Activated CD4-positive, alpha-beta memory T cell treated with anti-CD3 and anti-CD28 coated beads for 36 hours (primary cell): ENCODE measurements at regions of chr11 and their contacts with region 1.

Region 1: GRCh38 chr11:47642099-47642855 is at the start of gene MTCH2:
- DNase-seq: peak; percentile 98
- H3K4me3 Mint-ChIP-seq: peak within 1 kb of the TSS; percentile 94
- H3K27ac Mint-ChIP-seq: peak within 1 kb of the TSS; percentile 89
- H3K4me1 Mint-ChIP-seq: peaks cover 20% of the 10 kb centered on the region
- H3K27me3 Mint-ChIP-seq: no peaks in the 10 kb centered on the region
- total RNA-seq, gene MTCH2: 110 to 117 TPM

Region 2: DNA sequence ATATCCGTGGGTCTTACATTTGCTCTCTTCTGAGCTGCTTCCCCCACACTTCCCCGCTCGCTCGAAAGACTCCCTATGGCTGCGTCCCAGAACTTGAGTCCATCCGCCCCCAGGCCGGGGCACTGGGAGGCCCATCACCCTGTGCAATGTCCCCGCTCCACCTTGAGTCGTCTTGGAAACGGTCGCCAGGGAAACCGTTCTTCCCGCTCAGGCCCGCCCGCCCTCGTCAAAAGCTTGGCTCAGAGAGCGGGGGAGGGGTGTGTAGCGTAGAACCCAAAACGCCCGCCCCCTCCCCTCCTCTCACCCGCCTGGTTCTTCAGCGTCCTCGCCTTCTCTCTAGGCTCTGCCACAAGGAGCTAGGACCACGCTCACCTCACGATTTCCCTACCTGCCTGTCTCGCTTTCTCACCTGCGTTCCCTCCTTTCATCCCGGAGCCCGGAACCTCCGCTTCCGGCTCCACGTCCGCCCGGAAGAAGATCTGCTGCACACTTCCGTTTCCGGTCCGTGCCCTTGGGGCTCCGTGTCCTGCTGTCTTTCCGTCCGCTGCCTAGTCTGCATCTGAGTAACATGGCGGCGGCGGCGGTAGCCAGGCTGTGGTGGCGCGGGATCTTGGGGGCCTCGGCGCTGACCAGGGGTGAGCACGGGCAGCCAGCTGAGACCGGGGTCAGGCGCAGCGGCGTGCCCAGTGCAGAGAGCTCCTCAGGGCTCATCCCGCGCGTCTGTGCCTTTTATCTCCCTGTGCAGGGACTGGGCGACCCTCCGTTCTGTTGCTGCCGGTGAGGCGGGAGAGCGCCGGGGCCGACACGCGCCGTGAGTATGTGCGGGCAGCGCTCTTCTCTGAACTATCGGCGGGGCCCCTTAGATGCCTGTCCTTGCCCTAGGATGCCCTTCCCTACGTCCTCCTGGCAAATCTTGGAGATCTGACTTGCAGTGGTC is 63.5 kb before region 1 on chr11 and contains the starts of genes KBTBD4 and NDUFS3:
- CTCF ChIA-PET with region 1: no interaction called
- POLR2A ChIA-PET with region 1: interaction called, 4 read pairs
- intact Hi-C with region 1: loop called (anchors 1 kb)
- DNase-seq: peak; percentile 93
- H3K4me3 Mint-ChIP-seq: peak within 1 kb of the TSS; percentile 94
- H3K27ac Mint-ChIP-seq: peak within 1 kb of the TSS; percentile 93
- H3K4me1 Mint-ChIP-seq: peaks cover 32% of the 10 kb centered on the region
- H3K27me3 Mint-ChIP-seq: peaks cover 1% of the 10 kb centered on the region
- total RNA-seq, gene KBTBD4: 18.7 to 18.8 TPM
- total RNA-seq, gene NDUFS3: 94.0 to 94.4 TPM

Region 3: GRCh38 chr11:47620836-47621378 is 21.4 kb before region 1 on chr11:
- CTCF ChIA-PET with region 1: no interaction called
- POLR2A ChIA-PET with region 1: no interaction called
- intact Hi-C with region 1: no loop called
- DNase-seq: no peak
- H3K4me3 Mint-ChIP-seq: no peak overlapping the region
- H3K27ac Mint-ChIP-seq: no peak overlapping the region
- H3K4me1 Mint-ChIP-seq: no peaks in the 10 kb centered on the region
- H3K27me3 Mint-ChIP-seq: no peaks in the 10 kb centered on the region

Region 4: DNA sequence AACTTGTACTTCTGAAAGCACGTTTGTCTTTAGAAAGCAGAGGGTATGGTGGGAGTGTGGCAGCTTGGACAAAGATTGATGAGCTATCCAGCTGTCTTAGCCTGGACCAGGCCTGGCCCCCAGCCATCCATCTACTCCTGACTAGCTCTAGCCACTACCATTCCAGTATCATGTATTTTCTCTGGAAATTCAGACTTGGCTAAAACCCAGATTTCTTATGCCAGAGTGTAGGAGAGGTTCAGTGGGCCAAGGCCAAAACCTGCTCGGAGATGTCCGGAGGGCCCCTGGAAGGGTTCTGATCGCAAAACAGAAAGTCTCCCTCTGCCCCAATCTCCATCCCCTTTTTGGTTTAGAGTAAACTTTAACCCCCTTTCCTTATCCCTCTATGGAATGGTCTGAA is 24.9 kb after region 1 on chr11:
- CTCF ChIA-PET with region 1: no interaction called
- POLR2A ChIA-PET with region 1: interaction called, 3 read pairs
- intact Hi-C with region 1: loop called (anchors 1 kb)
- DNase-seq: no peak
- H3K4me3 Mint-ChIP-seq: no peak overlapping the region
- H3K27ac Mint-ChIP-seq: no peak overlapping the region
- H3K4me1 Mint-ChIP-seq: peaks cover 18% of the 10 kb centered on the region
- H3K27me3 Mint-ChIP-seq: no peaks in the 10 kb centered on the region

Region 5: DNA sequence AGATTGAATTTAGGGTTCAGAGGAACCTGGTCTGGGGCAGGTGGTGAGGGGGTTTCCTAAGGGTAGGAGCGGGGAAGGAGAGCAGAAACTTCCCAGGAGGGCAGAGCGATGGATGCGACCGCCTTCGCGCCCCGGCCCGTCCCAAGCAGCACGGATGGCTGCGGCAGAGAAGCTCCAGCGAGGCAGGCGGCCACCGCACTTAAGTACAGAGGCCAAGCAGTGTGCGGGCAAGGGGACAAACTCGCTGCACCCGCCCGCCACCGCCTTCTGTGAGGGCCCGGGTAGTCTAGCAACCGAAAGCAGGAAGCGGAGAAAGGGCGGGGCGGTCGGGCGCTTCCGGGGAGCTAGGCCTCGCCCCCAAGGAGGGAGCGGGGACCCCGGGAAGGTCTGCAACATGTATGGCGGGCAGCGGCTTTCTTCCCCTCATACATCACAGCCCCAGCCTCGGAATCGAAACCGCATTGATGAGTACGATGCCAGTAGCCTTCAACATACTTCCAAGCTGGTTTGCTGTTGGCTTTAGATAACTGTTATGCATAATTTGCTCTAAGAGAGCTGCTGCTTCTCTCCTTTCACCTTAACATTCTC is 72.9 kb after region 1 on chr11 and contains the start of gene AGBL2:
- CTCF ChIA-PET with region 1: interaction called, 4 read pairs
- POLR2A ChIA-PET with region 1: interaction called, 6 read pairs
- intact Hi-C with region 1: loop called (anchors 1 kb)
- DNase-seq: peak; percentile 91
- H3K4me3 Mint-ChIP-seq: peak within 1 kb of the TSS; percentile 86
- H3K27ac Mint-ChIP-seq: peak within 1 kb of the TSS; percentile 95
- H3K4me1 Mint-ChIP-seq: peaks cover 21% of the 10 kb centered on the region
- H3K27me3 Mint-ChIP-seq: no peaks in the 10 kb centered on the region
- total RNA-seq, gene AGBL2: 4.2 to 5.0 TPM

Region 6: DNA sequence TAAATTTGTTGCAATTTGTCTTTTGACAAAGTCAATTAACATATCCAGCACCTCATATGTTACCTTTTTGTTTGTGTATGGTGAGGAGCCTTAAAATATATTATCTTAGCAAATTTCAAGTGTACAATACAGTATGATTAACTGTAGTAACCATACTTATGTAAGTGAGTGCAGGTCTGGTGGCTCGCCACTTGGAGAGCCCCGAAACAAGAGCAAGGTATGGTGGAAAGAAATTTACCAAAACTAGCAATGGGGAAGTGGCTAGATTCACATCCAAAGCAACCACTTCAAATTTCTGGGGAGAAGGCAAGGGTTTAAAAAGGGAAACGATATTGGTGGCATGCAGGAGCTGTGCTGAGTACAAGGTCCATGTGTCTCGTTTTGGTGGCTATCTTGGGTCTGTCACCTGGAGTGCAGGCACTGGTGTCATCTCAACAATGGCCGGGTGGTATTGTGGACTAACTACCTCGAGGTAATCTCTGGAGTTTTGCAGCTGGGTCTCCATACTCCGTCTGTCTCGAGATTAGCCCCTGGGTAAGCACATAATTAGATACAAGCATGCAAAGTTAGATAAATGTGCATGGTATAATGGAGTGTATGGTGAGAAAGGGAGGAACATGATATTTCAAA is 133.1 kb after region 1 on chr11:
- CTCF ChIA-PET with region 1: no interaction called
- POLR2A ChIA-PET with region 1: no interaction called
- intact Hi-C with region 1: no loop called
- DNase-seq: no peak
- H3K4me3 Mint-ChIP-seq: no peak overlapping the region
- H3K27ac Mint-ChIP-seq: no peak overlapping the region
- H3K4me1 Mint-ChIP-seq: no peaks in the 10 kb centered on the region
- H3K27me3 Mint-ChIP-seq: no peaks in the 10 kb centered on the region

Region 7: GRCh38 chr11:47847892-47848635 is 205.8 kb after region 1 on chr11 and contains the start of gene NUP160:
- CTCF ChIA-PET with region 1: no interaction called
- POLR2A ChIA-PET with region 1: no interaction called
- intact Hi-C with region 1: loop called (anchors 1 kb)
- DNase-seq: peak; percentile 92
- H3K4me3 Mint-ChIP-seq: peak within 1 kb of the TSS; percentile 98
- H3K27ac Mint-ChIP-seq: peak within 1 kb of the TSS; percentile 97
- H3K4me1 Mint-ChIP-seq: peaks cover 45% of the 10 kb centered on the region
- H3K27me3 Mint-ChIP-seq: no peaks in the 10 kb centered on the region
- total RNA-seq, gene NUP160: 68.0 to 69.5 TPM